ENCODE measurements at regions of chr2 and their contacts with region 1.

Region 1: GRCh38 chr2:7044261-7045250 is 127.3 kb downstream of the RNF144A start:
- DNase-seq: peak; percentile 48
- ATAC-seq: peak; percentile 91
- H3K4me3 ChIP-seq: no peak overlapping the region
- H3K27ac ChIP-seq: no peak overlapping the region
- H3K4me1 ChIP-seq: no peaks in the 10 kb centered on the region
- H3K27me3 ChIP-seq: no peaks in the 10 kb centered on the region
- CTCF ChIP-seq: peak; percentile 90
- EP300 ChIP-seq: no peak
- POLR2A ChIP-seq: no peak
- RAD21 ChIP-seq: peak; percentile 68

Region 2: GRCh38 chr2:6826081-6826913 is 218.3 kb before region 1 on chr2:
- CTCF ChIA-PET with region 1: no interaction called
- POLR2A ChIA-PET with region 1: no interaction called
- in situ Hi-C with region 1: no loop called
- intact Hi-C with region 1: loop called (anchors 5 kb)
- DNase-seq: peak; percentile 32
- ATAC-seq: peak; percentile 60
- H3K4me3 ChIP-seq: no peak overlapping the region
- H3K27ac ChIP-seq: no peak overlapping the region
- H3K4me1 ChIP-seq: no peaks in the 10 kb centered on the region
- H3K27me3 ChIP-seq: peaks cover under 1 to 8% of the 10 kb centered on the region in 2 experiments; a peak in 2 of 5 replicates
- CTCF ChIP-seq: peak; percentile 64
- EP300 ChIP-seq: no peak
- POLR2A ChIP-seq: no peak
- RAD21 ChIP-seq: no peak

Measured in HepG2 (cell line).